Caco-2 (cell line): ENCODE measurements at regions of chr12 and their contacts with region 1.

Region 1: DNA sequence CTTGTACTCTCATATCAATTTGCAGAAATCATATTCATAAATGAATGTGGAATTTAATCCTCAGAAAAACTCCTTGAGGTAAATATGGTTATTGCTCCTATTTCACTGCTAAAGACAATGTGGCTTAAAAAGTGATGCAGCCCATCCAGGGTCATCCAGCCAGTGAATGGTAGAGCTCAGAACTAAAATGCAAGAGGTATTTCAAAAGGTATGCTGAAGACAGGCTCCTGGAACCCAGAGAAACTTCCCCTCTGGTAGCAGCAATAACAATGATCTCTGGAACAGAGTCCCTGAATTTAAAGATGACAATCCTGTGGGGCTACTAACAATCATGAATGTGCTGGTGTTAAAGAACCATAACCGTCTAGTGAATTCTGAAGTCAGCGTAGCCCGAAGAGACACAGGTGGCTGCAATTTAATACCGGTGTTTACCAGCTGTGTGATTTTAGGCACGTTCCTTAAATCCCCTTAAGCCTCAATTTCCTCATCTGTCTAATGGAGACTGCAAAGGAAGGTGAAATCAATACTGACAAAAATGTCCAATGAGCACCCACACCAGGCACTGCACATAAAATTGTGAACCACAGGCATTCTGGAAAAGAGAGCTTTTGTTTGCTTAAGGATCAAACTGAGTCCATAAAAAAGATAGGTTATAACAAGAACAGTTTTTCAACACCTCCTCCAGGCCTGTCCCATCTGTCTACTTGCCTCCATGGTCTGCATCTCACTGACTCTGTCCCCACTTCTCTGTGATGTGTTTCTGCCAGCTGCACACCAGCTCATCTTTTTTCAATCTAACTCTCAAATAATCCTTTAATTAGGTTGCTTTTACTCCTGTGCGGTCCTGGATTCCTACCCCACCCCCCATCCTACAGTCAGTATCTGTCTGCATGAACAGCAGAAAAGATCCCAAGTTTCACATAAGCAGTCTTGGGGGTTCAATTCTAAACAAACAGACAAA is 10.5 kb downstream of the TM7SF3 start:
- DNase-seq: peak in 1 of 2 experiments; percentile 46
- H3K4me3 ChIP-seq: no peak overlapping the region
- H3K4me3 Mint-ChIP-seq: peak overlapping the region; percentile 20
- H3K27ac Mint-ChIP-seq: peak overlapping the region; percentile 86
- H3K4me1 ChIP-seq: peaks cover 36% of the 10 kb centered on the region
- H3K4me1 Mint-ChIP-seq: peaks cover 22% of the 10 kb centered on the region
- H3K27me3 ChIP-seq: no peaks in the 10 kb centered on the region
- H3K27me3 Mint-ChIP-seq: no peaks in the 10 kb centered on the region
- CTCF ChIP-seq: no peak

Region 2: GRCh38 chr12:26987634-26988424 is 15.9 kb before region 1 on chr12:
- CTCF ChIA-PET with region 1: no interaction called
- POLR2A ChIA-PET with region 1: no interaction called
- intact Hi-C with region 1: loop called (anchors 2 kb)
- DNase-seq: no peak
- H3K4me3 ChIP-seq: no peak overlapping the region
- H3K4me3 Mint-ChIP-seq: no peak overlapping the region
- H3K27ac Mint-ChIP-seq: no peak overlapping the region
- H3K4me1 ChIP-seq: peaks cover 11% of the 10 kb centered on the region
- H3K4me1 Mint-ChIP-seq: peaks cover 14% of the 10 kb centered on the region
- H3K27me3 ChIP-seq: no peaks in the 10 kb centered on the region
- H3K27me3 Mint-ChIP-seq: no peaks in the 10 kb centered on the region
- CTCF ChIP-seq: no peak